Calu3 (cell line): ENCODE measurements at regions of chr13 and their contacts with region 1.

Region 1: GRCh38 chr13:74133657-74134201 is 475 bp downstream of the KLF12 start:
- DNase-seq: peak; percentile 30
- H3K4me3 Mint-ChIP-seq: no peak overlapping the region
- H3K27ac Mint-ChIP-seq: peak overlapping the region; percentile 39
- H3K4me1 Mint-ChIP-seq: no peaks in the 10 kb centered on the region
- H3K27me3 Mint-ChIP-seq: no peaks in the 10 kb centered on the region
- CTCF ChIP-seq: no peak

Region 2: GRCh38 chr13:73835138-73835721 is 298.5 kb before region 1 on chr13:
- CTCF ChIA-PET with region 1: no interaction called
- intact Hi-C with region 1: loop called (anchors 10 kb)
- DNase-seq: no peak
- H3K4me3 Mint-ChIP-seq: no peak overlapping the region
- H3K27ac Mint-ChIP-seq: no peak overlapping the region
- H3K4me1 Mint-ChIP-seq: no peaks in the 10 kb centered on the region
- H3K27me3 Mint-ChIP-seq: no peaks in the 10 kb centered on the region
- CTCF ChIP-seq: no peak

Region 3: DNA sequence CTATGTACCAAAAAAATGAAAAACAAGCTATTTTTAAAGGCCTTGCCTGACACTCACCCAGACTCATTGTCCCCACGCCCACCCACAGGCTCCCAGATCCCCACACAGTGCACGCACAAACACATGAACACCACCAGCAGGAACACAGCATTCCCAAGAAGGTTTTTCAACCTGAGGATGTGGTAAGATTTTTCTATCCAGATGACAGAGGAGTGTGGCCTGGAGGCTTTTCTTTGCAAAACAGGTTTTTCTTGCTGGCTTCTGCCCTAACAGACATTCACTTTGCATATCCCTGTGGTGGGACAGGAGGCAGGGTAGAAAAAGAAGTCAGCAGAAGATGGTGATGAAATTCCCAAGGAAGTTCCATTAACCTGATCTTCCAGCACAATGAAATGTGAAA is 97.4 kb before region 1 on chr13:
- CTCF ChIA-PET with region 1: no interaction called
- intact Hi-C with region 1: loop called (anchors 10 kb)
- DNase-seq: peak; percentile 28
- H3K4me3 Mint-ChIP-seq: no peak overlapping the region
- H3K27ac Mint-ChIP-seq: no peak overlapping the region
- H3K4me1 Mint-ChIP-seq: no peaks in the 10 kb centered on the region
- H3K27me3 Mint-ChIP-seq: no peaks in the 10 kb centered on the region
- CTCF ChIP-seq: no peak

Region 4: GRCh38 chr13:74090869-74091605 is 42.7 kb before region 1 on chr13:
- CTCF ChIA-PET with region 1: no interaction called
- intact Hi-C with region 1: no loop called
- DNase-seq: no peak
- H3K4me3 Mint-ChIP-seq: no peak overlapping the region
- H3K27ac Mint-ChIP-seq: no peak overlapping the region
- H3K4me1 Mint-ChIP-seq: no peaks in the 10 kb centered on the region
- H3K27me3 Mint-ChIP-seq: no peaks in the 10 kb centered on the region
- CTCF ChIP-seq: no peak

Region 5: GRCh38 chr13:74280795-74281490 is 147.2 kb after region 1 on chr13:
- CTCF ChIA-PET with region 1: no interaction called
- intact Hi-C with region 1: loop called (anchors 5 kb)
- DNase-seq: no peak
- H3K4me3 Mint-ChIP-seq: no peak overlapping the region
- H3K27ac Mint-ChIP-seq: no peak overlapping the region
- H3K4me1 Mint-ChIP-seq: no peaks in the 10 kb centered on the region
- H3K27me3 Mint-ChIP-seq: no peaks in the 10 kb centered on the region
- CTCF ChIP-seq: no peak

Region 6: DNA sequence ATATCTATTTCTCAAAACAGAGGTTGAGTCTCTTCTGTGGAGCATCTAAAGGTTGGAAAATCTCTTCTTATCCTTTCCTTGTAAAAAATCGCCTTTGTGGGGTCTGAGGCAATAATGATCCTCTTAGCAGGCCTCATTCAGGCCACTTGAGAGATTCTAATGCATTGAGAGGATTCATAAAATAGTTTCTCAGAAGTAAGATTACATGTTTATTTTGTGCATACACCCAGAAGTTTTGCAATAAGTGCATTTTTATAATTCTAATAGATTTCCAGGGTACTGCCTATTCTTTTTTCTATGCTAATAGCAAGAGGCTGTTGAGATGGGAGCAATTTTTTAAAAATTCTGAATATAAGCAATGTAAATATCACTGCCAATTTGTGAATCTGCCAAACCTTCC is 342.6 kb after region 1 on chr13:
- CTCF ChIA-PET with region 1: no interaction called
- intact Hi-C with region 1: no loop called
- DNase-seq: no peak
- H3K4me3 Mint-ChIP-seq: no peak overlapping the region
- H3K27ac Mint-ChIP-seq: no peak overlapping the region
- H3K4me1 Mint-ChIP-seq: no peaks in the 10 kb centered on the region
- H3K27me3 Mint-ChIP-seq: no peaks in the 10 kb centered on the region
- CTCF ChIP-seq: no peak